ENCODE measurements at regions of chr10 and their contacts with region 1.

Region 1: DNA sequence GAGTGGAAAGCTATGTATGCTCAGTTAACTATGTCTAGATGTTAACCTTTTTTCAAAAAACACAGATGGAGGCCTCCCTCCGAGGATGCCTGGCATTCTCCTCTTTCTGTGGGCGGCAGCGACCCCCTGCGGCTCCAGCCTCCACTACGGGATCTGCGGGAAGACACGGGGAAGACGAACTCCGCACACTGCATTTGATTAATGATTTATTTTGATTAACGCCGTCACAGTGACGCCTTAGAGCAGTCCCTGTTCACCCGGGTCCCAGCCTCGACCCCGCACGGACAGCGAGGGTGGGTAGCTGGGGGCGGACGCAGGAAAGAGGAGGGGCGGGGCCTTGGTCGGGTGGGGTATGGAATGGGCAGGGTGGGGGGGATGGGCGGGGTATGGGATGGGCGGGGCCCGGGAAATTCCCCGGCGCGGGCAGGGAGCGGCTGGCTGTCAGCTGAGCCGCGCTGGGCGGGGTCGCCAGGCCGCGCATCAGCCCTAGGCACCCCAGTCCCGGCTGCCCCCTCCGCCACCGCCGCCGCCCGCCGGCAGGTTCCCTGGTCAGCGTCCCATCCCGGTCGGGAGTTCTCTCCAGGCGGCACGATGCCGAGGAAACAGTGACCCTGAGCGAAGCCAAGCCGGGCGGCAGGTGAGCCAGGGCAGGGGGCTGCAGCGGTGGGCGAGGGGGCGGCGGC is at the start of gene OPTN:
- DNase-seq: peak; percentile 84
- H3K4me3 ChIP-seq: peak within 1 kb of the TSS; percentile 50 to 95 (median 78)
- H3K27ac ChIP-seq: peak within 1 kb of the TSS; percentile 91 to 99 (median 93)
- H3K4me1 ChIP-seq: peaks cover 3 to 30% (median 16%) of the 10 kb centered on the region in 4 donors
- H3K27me3 ChIP-seq: no peaks in the 10 kb centered on the region
- CTCF ChIP-seq: peak; percentile 43 to 63 (median 58)
- EP300 ChIP-seq: no peak
- POLR2A ChIP-seq: peak; percentile 80
- total RNA-seq, gene OPTN: 39.2 to 74.8 (median 66.3) TPM

Region 2: DNA sequence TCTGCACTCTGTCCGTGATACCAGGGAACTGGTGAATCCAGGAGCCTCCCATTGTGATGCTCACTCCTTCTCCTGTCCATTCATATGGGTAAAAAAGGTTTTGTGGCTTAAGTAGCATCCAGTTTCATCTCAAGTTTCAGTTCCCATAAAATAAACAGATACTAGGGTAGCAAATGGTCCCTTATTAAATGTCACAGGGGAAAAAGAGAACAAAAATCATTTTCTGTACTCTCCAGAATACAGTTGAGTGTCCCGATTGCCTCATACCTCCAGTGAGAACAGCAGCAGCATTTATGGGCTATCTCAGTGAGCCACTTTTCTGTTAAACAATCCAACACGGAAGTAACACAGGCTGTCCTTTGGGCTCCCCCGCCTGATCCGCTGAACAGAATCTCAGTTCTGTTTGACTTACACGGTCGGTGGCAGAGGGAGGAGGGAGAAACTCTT is 1902.5 kb before region 1 on chr10:
- in situ Hi-C with region 1: no loop called
- intact Hi-C with region 1: loop called (anchors 5 kb)
- DNase-seq: peak; percentile 53
- H3K4me3 ChIP-seq: no peak overlapping the region
- H3K27ac ChIP-seq: peak overlapping the region in 3 of 4 donors; percentile 8 to 46 (median 13)
- H3K4me1 ChIP-seq: peaks cover 9 to 34% (median 12%) of the 10 kb centered on the region in 4 donors
- H3K27me3 ChIP-seq: no peaks in the 10 kb centered on the region
- CTCF ChIP-seq: no peak
- EP300 ChIP-seq: no peak
- POLR2A ChIP-seq: no peak

Region 3: GRCh38 chr10:13087986-13088618 is 11.7 kb before region 1 on chr10:
- in situ Hi-C with region 1: no loop called
- intact Hi-C with region 1: no loop called
- DNase-seq: no peak
- H3K4me3 ChIP-seq: no peak overlapping the region
- H3K27ac ChIP-seq: peak overlapping the region in 1 of 4 donors; percentile 43
- H3K4me1 ChIP-seq: peaks cover 0 to 19% (median 4%) of the 10 kb centered on the region in 4 donors
- H3K27me3 ChIP-seq: no peaks in the 10 kb centered on the region
- CTCF ChIP-seq: no peak
- EP300 ChIP-seq: no peak
- POLR2A ChIP-seq: no peak